ENCODE measurements at regions of chr22 and their contacts with region 1.

Region 1: DNA sequence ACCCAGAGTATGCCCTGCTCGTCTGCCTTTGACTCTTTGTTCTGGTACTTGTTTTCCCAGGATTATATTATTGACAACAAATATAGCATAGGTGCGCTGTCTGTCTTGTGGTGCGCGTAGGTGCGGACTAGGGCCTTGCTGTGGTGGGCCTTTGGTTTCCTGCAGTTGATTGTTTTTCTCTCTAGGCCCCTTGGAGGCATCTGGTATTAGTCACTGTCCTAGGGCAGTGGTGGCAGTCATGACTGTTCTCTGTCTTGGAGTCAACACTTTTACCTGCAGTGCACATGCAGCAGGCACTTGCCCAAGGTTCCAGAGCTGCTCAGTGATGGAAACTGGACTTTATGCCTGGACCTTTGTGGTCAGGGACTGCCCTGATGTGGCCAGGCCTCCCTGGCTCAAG is 18.6 kb downstream of the PPP6R2 start:
- DNase-seq: no peak
- H3K4me3 ChIP-seq: no peak overlapping the region
- H3K27me3 ChIP-seq: no peaks in the 10 kb centered on the region
- CTCF ChIP-seq: no peak

Region 2: GRCh38 chr22:50169774-50170341 is 191.8 kb before region 1 on chr22:
- CTCF ChIA-PET with region 1: no interaction called
- POLR2A ChIA-PET with region 1: no interaction called
- DNase-seq: no peak
- H3K4me3 ChIP-seq: peak overlapping the region; percentile 46
- H3K27me3 ChIP-seq: no peaks in the 10 kb centered on the region
- CTCF ChIP-seq: no peak

Region 3: GRCh38 chr22:50250555-50251476 is 110.9 kb before region 1 on chr22 and contains the start of gene HDAC10:
- CTCF ChIA-PET with region 1: interaction called, 20 read pairs
- POLR2A ChIA-PET with region 1: no interaction called
- DNase-seq: no peak
- H3K4me3 ChIP-seq: peak within 1 kb of the TSS; percentile 65
- H3K27me3 ChIP-seq: no peaks in the 10 kb centered on the region
- CTCF ChIP-seq: no peak
- polyA plus RNA-seq, gene HDAC10: 8.8 and 18.2 TPM in 2 replicates

Region 4: DNA sequence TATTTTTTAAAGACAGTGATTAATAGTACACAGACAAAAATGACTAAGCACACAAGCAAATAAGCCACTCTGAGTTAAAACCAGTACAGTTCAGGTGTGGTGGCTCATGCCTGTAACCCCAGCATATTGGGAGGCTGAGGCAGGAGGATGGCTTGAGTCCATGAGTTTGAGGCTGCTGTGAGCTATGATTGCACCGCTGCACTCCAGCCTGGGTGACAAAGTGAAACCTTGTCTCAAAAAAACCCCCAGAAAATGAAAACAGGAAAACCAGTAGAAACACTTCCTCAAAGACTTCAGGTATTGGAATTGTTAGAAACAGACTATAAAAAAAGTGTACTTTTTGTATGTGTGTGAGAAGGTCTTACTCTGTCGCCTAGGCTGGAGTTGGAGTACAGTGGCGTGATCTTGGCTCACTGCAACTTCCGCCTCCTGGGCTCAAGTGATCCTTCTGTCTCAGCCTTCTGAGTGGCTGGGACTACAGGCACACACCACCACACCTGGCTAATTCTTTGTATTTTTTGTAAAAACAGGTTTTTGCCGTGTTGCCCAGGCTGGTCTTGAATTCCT is 14.5 kb after region 1 on chr22:
- CTCF ChIA-PET with region 1: interaction called, 3 read pairs
- POLR2A ChIA-PET with region 1: interaction called, 20 read pairs
- DNase-seq: no peak
- H3K4me3 ChIP-seq: no peak overlapping the region
- H3K27me3 ChIP-seq: no peaks in the 10 kb centered on the region
- CTCF ChIP-seq: no peak